ENCODE measurements at regions of chr9 and their contacts with region 1.

Region 1: GRCh38 chr9:130172161-130172857 is at the start of gene NCS1:
- DNase-seq: peak; percentile 74 to 89 (median 85)
- H3K4me3 ChIP-seq: peak within 1 kb of the TSS; percentile 64
- H3K27ac ChIP-seq: peak within 1 kb of the TSS in 1 of 2 donors; percentile 81
- H3K4me1 ChIP-seq: peaks cover 12% of the 10 kb centered on the region
- H3K27me3 ChIP-seq: no peaks in the 10 kb centered on the region
- CTCF ChIP-seq: no peak
- EP300 ChIP-seq: no peak
- POLR2A ChIP-seq: no peak
- total RNA-seq, gene NCS1: 3.6 to 46.7 (median 29.5) TPM

Region 2: GRCh38 chr9:130034570-130034969 is 137.7 kb before region 1 on chr9:
- intact Hi-C with region 1: no loop called
- DNase-seq: no peak
- H3K4me3 ChIP-seq: no peak overlapping the region
- H3K27ac ChIP-seq: no peak overlapping the region
- H3K4me1 ChIP-seq: peaks cover 4% of the 10 kb centered on the region
- H3K27me3 ChIP-seq: no peaks in the 10 kb centered on the region
- CTCF ChIP-seq: no peak
- EP300 ChIP-seq: no peak
- POLR2A ChIP-seq: no peak

Region 3: GRCh38 chr9:130235897-130236668 is 63.8 kb after region 1 on chr9:
- intact Hi-C with region 1: loop called in 3 of 4 experiments (anchors 5 to 10 kb)
- DNase-seq: peak; percentile 63 to 86 (median 79)
- H3K4me3 ChIP-seq: no peak overlapping the region
- H3K27ac ChIP-seq: no peak overlapping the region
- H3K4me1 ChIP-seq: peaks cover 3% of the 10 kb centered on the region
- H3K27me3 ChIP-seq: no peaks in the 10 kb centered on the region
- CTCF ChIP-seq: peak; percentile 96 to 99 (median 98)
- EP300 ChIP-seq: no peak
- POLR2A ChIP-seq: peak; percentile 17

Measured in ovary (tissue), 10 donors.